ENCODE measurements at regions of chr1 and their contacts with region 1.

Region 1: DNA sequence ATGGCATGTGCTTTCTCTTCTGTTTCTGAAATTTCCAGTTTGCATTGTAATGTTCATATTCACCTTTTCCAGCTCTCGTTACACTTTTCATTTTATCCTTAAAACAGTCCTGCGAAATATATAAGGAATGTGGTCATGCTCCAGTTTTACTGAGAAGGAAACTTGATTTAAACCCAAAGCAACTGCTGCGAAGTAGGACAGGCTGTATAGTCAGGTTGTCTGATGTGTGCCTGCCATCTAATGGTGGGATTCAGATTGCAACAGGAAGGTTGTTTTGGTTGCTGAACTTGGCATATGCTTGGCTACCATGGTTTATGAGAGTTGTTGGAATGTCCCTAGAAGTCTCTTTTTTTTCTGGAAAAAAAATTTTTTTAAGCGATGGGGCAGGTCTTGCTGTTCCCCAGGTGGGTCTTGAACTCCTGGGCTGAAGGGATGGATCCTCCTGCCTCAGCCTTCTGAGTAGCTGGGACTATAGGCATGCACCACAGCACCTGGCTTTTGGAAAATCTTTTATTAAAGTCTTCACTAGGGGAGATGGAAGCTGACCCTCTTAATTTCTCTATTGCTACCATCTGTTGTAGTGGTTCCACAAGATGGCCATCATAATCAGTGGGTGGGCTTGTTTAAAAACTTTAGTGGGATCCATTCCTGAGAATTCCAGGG is 86.9 kb downstream of the UCK2 start:
- DNase-seq: peak; percentile 60 to 70 (median 66)
- H3K4me3 ChIP-seq: no peak overlapping the region
- H3K4me3 Mint-ChIP-seq: no peak overlapping the region
- H3K27ac ChIP-seq: no peak overlapping the region
- H3K27ac Mint-ChIP-seq: no peak overlapping the region
- H3K4me1 ChIP-seq: no peaks in the 10 kb centered on the region
- H3K4me1 Mint-ChIP-seq: peaks cover 9% of the 10 kb centered on the region
- H3K27me3 ChIP-seq: peaks cover 0 to 2% of the 10 kb centered on the region in 2 donors
- H3K27me3 Mint-ChIP-seq: peaks cover 0 to 1% (median 0%) of the 10 kb centered on the region in 3 donors
- CTCF ChIP-seq: peak; percentile 85

Region 2: DNA sequence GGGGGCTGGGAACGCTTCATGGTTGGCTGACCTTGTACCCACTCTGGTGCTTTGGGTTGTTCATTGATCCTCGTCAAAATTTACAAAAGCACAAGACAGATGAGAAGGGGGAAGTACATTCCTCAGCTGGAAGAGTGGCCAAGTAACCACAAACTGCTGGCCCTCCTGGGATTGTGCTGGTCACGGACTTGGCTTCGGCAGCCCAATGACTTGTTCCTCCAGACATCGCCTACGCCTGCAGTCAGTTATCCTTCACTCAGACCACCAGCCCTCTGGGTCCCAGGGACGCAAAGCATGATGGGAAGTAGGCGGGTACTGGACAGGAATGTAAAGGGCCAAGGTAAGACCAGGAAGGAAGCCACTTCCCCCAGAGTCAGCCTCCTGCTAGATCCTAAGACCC is 610.9 kb before region 1 on chr1:
- intact Hi-C with region 1: no loop called
- DNase-seq: no peak
- H3K4me3 ChIP-seq: no peak overlapping the region
- H3K4me3 Mint-ChIP-seq: no peak overlapping the region
- H3K27ac ChIP-seq: no peak overlapping the region
- H3K27ac Mint-ChIP-seq: no peak overlapping the region
- H3K4me1 ChIP-seq: no peaks in the 10 kb centered on the region
- H3K4me1 Mint-ChIP-seq: no peaks in the 10 kb centered on the region
- H3K27me3 ChIP-seq: no peaks in the 10 kb centered on the region
- H3K27me3 Mint-ChIP-seq: peaks cover 0 to 4% (median 3%) of the 10 kb centered on the region in 3 donors
- CTCF ChIP-seq: no peak

Region 3: DNA sequence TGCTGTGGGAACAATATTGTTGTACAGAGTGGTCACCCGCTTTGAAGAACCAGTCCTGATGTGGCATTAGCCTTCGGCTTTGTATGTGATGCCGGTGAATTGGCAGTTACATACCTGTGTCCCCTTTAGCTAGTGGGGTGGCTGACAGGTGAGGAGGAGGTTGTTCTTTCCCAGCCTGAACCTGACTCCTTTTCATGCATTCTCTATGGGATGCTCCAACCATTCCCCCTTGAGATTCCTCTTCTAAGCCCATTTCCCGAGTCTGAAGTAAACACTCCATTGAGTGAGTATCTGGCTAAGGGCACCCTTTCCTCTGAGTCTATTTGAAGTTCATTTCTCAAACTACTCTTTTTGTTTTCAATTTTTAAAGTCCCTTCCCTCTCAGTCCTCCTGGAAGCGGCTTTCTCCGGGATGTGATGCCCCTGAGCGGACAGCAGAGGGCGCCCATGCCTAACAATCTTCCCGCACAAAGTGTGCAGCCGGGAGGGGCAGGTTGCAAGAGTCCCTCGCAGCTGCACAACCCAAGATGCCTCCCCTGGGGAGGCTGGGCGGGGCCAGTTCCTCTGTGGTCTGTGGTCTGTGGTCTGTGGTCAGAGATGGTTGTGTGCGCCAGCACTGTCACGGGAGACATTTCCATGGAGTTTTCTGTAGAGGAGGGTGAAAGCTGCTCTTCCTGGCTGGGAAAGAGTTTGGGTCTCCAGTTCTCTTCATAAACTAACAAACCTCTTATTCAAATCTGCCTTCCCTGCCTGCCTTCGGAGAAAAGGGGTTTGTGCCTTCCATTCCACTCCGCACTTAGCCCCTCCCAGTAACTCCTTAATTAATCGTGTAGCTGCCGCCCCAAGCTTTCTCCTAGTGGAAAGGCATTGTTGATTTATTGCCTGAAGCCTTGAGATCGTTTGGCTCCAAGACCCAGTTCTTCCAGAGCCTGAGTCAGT is 521.4 kb before region 1 on chr1:
- intact Hi-C with region 1: loop called (anchors 5 to 10 kb)
- DNase-seq: peak; percentile 90 to 95 (median 90)
- H3K4me3 ChIP-seq: peak overlapping the region in 1 of 3 experiments; percentile 36
- H3K4me3 Mint-ChIP-seq: peak overlapping the region; percentile 55 to 79
- H3K27ac ChIP-seq: no peak overlapping the region
- H3K27ac Mint-ChIP-seq: peak overlapping the region in 4 of 7 donors; percentile 54 to 82 (median 68)
- H3K4me1 ChIP-seq: peaks cover 15 to 17% of the 10 kb centered on the region in 2 donors
- H3K4me1 Mint-ChIP-seq: peaks cover 21% of the 10 kb centered on the region
- H3K27me3 ChIP-seq: peaks cover 87 to 96% of the 10 kb centered on the region in 2 donors
- H3K27me3 Mint-ChIP-seq: peaks cover 89 to 97% (median 96%) of the 10 kb centered on the region in 3 donors
- CTCF ChIP-seq: peak; percentile 97

Region 4: DNA sequence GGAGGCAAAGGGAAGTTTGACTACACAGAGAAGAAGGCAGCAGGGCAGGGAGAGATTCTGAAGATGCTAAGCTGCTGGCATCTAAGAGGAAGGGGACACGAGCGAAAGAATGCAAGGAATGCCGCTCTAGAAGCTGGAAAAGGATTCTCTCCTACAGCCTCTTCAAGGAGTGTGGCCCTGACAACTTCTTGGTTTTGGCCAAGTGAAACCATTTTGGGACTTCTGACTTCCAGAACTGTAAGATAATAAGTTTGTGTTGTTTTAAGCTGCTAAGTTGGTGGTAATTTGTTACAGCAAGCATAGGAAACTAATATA is 254.7 kb before region 1 on chr1:
- intact Hi-C with region 1: no loop called
- DNase-seq: no peak
- H3K4me3 ChIP-seq: no peak overlapping the region
- H3K4me3 Mint-ChIP-seq: no peak overlapping the region
- H3K27ac ChIP-seq: no peak overlapping the region
- H3K27ac Mint-ChIP-seq: peak overlapping the region in 2 of 7 donors; percentile 28 to 79
- H3K4me1 ChIP-seq: no peaks in the 10 kb centered on the region
- H3K4me1 Mint-ChIP-seq: no peaks in the 10 kb centered on the region
- H3K27me3 ChIP-seq: no peaks in the 10 kb centered on the region
- H3K27me3 Mint-ChIP-seq: no peaks in the 10 kb centered on the region
- CTCF ChIP-seq: no peak

Region 5: GRCh38 chr1:165717918-165718515 is 196.2 kb before region 1 on chr1:
- intact Hi-C with region 1: loop called (anchors 5 kb)
- DNase-seq: peak; percentile 15 to 32 (median 30)
- H3K4me3 ChIP-seq: no peak overlapping the region
- H3K4me3 Mint-ChIP-seq: no peak overlapping the region
- H3K27ac ChIP-seq: no peak overlapping the region
- H3K27ac Mint-ChIP-seq: no peak overlapping the region
- H3K4me1 ChIP-seq: no peaks in the 10 kb centered on the region
- H3K4me1 Mint-ChIP-seq: no peaks in the 10 kb centered on the region
- H3K27me3 ChIP-seq: no peaks in the 10 kb centered on the region
- H3K27me3 Mint-ChIP-seq: peaks cover 0 to 4% (median 0%) of the 10 kb centered on the region in 3 donors
- CTCF ChIP-seq: peak; percentile 51

Region 6: GRCh38 chr1:165768513-165769394 is 145.5 kb before region 1 on chr1 and contains the start of gene TMCO1:
- intact Hi-C with region 1: loop called in 1 of 2 experiments (anchors 10 kb)
- DNase-seq: peak; percentile 98 to 99 (median 99)
- H3K4me3 ChIP-seq: peak within 1 kb of the TSS; percentile 50 to 98 (median 94)
- H3K4me3 Mint-ChIP-seq: peak within 1 kb of the TSS; percentile 85 to 99
- H3K27ac ChIP-seq: peak within 1 kb of the TSS; percentile 92 to 99
- H3K27ac Mint-ChIP-seq: peak within 1 kb of the TSS; percentile 96 to 99 (median 98)
- H3K4me1 ChIP-seq: peaks cover 15 to 32% of the 10 kb centered on the region in 2 donors
- H3K4me1 Mint-ChIP-seq: peaks cover 42% of the 10 kb centered on the region
- H3K27me3 ChIP-seq: no peaks in the 10 kb centered on the region
- H3K27me3 Mint-ChIP-seq: no peaks in the 10 kb centered on the region
- CTCF ChIP-seq: peak; percentile 17
- polyA plus RNA-seq, gene TMCO1: 24.1 to 154 (median 146) TPM

Measured in CD14-positive monocyte (primary cell).